Naive thymus-derived CD4-positive, alpha-beta T cell (primary cell): ENCODE measurements at regions of chr1 and their contacts with region 1.

Region 1: DNA sequence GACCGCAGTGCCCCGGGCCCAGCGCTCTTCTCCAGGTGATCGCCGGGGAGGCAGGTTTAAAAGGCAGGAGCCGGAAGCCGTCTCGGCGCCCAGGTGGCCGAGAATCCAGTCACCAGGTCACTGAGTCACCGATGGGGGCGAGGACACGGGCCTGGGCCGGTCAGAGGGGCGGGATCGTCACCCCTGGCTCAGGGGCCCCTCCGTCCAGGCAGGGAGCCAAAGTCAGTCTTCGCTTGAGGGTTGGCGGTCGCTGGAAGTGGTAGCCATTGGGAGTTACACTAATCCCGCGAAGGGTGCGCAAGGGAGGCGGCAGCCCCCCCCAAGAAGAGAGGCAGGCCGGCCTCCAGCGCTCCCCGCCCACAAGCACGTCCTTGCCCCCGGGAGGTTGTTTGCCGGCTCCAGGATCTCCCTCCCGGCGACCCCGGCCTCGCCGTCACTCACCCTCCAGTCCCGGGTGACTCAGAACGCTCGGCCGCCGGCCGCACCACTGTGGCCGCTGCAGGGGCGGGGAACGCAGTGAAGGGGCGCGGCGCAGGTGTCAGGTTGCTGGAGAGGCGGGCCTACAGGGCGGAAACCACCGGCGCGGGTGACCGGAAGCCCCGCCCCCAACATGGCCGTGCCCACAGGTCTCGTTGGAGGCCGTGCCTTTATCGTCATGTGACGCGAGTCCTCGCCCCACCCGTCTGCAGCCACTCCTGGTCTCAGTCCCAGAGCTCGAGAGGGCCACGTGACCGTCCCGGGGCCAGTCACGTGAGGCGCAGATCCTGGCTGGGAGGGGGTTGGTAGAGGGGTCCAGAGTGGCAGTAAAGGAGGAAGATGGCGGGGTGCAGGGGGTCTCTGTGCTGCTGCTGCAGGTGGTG is at the starts of genes CLCN6 and MTHFR:
- DNase-seq: peak; percentile 93 to 98 (median 97)
- ATAC-seq: peak; percentile 95
- H3K4me3 ChIP-seq: peak within 1 kb of the TSS; percentile 86
- H3K4me3 Mint-ChIP-seq: peak within 1 kb of the TSS; percentile 94 to 100 (median 98)
- H3K27ac ChIP-seq: peak within 1 kb of the TSS; percentile 92
- H3K27ac Mint-ChIP-seq: peak within 1 kb of the TSS; percentile 94 to 99 (median 96)
- H3K4me1 ChIP-seq: peaks cover 39 to 40% of the 10 kb centered on the region in 2 donors
- H3K4me1 Mint-ChIP-seq: peaks cover 37 to 72% (median 60%) of the 10 kb centered on the region in 7 donors
- H3K27me3 ChIP-seq: no peaks in the 10 kb centered on the region
- H3K27me3 Mint-ChIP-seq: no peaks in the 10 kb centered on the region
- total RNA-seq, gene CLCN6: 13.3 to 23.0 (median 20.9) TPM
- total RNA-seq, gene MTHFR: 31.0 to 64.4 (median 55.2) TPM

Region 2: DNA sequence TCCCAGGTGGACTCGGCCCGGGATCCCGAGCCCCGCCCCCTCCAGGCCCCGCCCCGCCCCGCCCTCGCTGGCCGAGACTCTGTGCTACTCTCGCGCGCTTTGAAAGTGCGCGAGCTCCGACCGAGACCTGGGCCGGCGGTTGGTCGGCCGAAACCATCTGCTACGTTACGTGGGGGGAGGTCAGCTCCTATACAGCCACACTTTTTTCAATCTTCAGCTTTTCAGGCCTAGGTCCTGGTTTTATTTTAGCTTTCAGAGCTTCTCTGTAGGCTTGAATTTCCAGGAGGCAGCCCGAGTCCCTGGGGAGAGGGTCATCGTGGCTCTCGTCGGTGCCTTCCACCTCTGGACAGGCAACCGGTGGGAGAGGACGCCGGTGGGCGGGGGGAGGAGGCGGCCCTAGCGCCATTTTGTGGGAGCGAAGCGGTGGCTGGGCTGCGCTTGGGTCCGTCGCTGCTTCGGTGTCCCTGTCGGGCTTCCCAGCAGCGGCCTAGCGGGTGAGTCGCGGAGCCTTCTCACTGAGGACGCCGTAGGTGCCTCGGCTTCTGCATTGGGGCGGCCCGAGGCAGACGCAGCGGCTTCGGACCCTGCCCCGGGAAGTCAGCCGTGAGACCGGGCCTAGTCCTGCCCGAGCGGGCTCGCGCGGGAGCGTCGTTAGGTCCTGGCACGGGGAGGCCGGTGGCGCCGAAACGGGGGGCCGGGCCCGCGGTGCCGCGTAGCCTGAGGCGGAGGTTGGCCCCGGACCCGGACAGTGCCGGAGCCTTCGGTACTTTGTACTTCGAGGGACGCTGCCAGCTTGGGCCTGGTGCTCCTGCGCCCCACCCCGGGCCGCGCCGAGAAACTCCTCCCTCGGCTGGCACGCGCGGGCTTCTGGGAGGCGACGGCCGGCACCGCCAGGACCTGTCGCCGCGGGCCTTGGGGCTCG is 793.2 kb before region 1 on chr1 and contains the start of gene TARDBP:
- CTCF ChIA-PET with region 1: no interaction called
- POLR2A ChIA-PET with region 1: no interaction called
- intact Hi-C with region 1: loop called in 1 of 2 experiments (anchors 1 kb)
- DNase-seq: peak; percentile 88 to 95 (median 93)
- ATAC-seq: peak; percentile 95
- H3K4me3 ChIP-seq: peak within 1 kb of the TSS; percentile 74
- H3K4me3 Mint-ChIP-seq: peak within 1 kb of the TSS; percentile 86 to 96 (median 93)
- H3K27ac ChIP-seq: peak within 1 kb of the TSS; percentile 94
- H3K27ac Mint-ChIP-seq: peak within 1 kb of the TSS; percentile 95 to 98 (median 98)
- H3K4me1 ChIP-seq: peaks cover 19 to 24% of the 10 kb centered on the region in 2 donors
- H3K4me1 Mint-ChIP-seq: peaks cover 15 to 36% (median 26%) of the 10 kb centered on the region in 7 donors
- H3K27me3 ChIP-seq: no peaks in the 10 kb centered on the region
- H3K27me3 Mint-ChIP-seq: no peaks in the 10 kb centered on the region
- total RNA-seq, gene TARDBP: 114 to 196 (median 174) TPM

Region 3: GRCh38 chr1:11262171-11263049 is 543.3 kb before region 1 on chr1 and contains the start of gene MTOR:
- CTCF ChIA-PET with region 1: no interaction called
- POLR2A ChIA-PET with region 1: no interaction called
- intact Hi-C with region 1: loop called in 1 of 2 experiments (anchors 5 kb)
- DNase-seq: peak; percentile 76 to 99 (median 98)
- ATAC-seq: peak; percentile 98
- H3K4me3 ChIP-seq: peak within 1 kb of the TSS; percentile 90
- H3K4me3 Mint-ChIP-seq: peak within 1 kb of the TSS; percentile 87 to 98 (median 93)
- H3K27ac ChIP-seq: peak within 1 kb of the TSS; percentile 83
- H3K27ac Mint-ChIP-seq: peak within 1 kb of the TSS; percentile 84 to 96 (median 90)
- H3K4me1 ChIP-seq: peaks cover 9 to 14% of the 10 kb centered on the region in 2 donors
- H3K4me1 Mint-ChIP-seq: peaks cover 6 to 31% (median 22%) of the 10 kb centered on the region in 7 donors
- H3K27me3 ChIP-seq: no peaks in the 10 kb centered on the region
- H3K27me3 Mint-ChIP-seq: peaks cover 0 to 5% (median 0%) of the 10 kb centered on the region in 5 donors
- total RNA-seq, gene MTOR: 38.8 to 47.9 (median 46.2) TPM

Region 4: GRCh38 chr1:11681071-11681771 is 124.5 kb before region 1 on chr1 and contains the start of gene MAD2L2:
- CTCF ChIA-PET with region 1: interaction called, 3 read pairs
- POLR2A ChIA-PET with region 1: interaction called, 3 read pairs
- intact Hi-C with region 1: loop called in 1 of 2 experiments (anchors 1 kb)
- DNase-seq: peak; percentile 80 to 96 (median 87)
- ATAC-seq: peak; percentile 98
- H3K4me3 ChIP-seq: peak within 1 kb of the TSS; percentile 79
- H3K4me3 Mint-ChIP-seq: peak within 1 kb of the TSS; percentile 89 to 99 (median 96)
- H3K27ac ChIP-seq: peak within 1 kb of the TSS; percentile 86
- H3K27ac Mint-ChIP-seq: peak within 1 kb of the TSS; percentile 74 to 98 (median 89)
- H3K4me1 ChIP-seq: peaks cover 0 to 9% of the 10 kb centered on the region in 2 donors
- H3K4me1 Mint-ChIP-seq: peaks cover 6 to 28% (median 19%) of the 10 kb centered on the region in 7 donors
- H3K27me3 ChIP-seq: no peaks in the 10 kb centered on the region
- H3K27me3 Mint-ChIP-seq: peaks cover 0 to 12% (median 0%) of the 10 kb centered on the region in 5 donors
- total RNA-seq, gene MAD2L2: 17.1 to 53.3 (median 27.2) TPM

Region 5: DNA sequence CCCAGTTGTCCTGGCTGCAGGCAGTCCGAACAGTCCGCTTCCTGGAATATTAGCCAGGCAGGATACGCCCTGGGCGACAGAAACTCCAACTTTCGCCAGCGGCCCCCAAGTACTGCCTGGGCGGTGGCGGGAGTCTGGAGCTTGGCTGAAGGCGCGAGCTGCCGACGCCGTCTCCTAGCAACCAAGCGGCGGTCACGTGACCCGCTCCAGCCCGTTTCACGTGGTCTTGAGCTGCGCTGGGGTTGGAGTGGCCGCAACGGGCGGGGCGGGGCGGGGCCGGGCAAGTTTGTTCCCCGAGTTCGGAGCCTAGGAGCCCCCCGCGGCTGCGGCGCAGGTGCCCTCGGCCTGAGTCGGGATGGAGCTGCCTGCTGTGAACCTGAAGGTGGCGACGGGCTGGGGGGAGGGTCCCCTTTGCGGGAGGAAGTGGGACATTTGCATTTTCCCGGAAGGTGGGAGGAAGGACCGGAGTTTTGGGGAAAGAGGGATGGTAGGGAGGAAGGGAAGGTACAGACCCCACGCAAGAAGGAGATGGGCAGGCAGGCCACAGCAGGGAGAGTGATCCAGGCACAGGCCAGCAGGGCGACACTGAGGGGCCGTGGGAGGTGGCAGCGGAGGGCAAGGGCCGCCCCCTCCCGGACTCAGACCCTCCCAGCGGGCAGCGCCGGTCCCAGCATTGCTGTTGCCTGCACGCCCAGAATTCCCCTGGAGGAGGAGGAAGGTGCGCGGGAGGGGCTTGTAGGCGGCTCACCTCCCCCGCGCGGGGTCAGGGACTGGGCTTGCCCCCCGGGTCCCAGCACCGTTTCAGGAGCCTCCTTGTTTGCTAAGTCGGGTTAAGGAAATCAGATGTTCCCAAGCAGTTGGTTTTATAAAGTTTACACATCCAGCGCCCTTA is 69.6 kb before region 1 on chr1 and contains the start of gene AGTRAP:
- CTCF ChIA-PET with region 1: no interaction called
- POLR2A ChIA-PET with region 1: interaction called, 8 read pairs
- intact Hi-C with region 1: loop called (anchors 1 to 5 kb)
- DNase-seq: peak; percentile 62 to 84 (median 71)
- ATAC-seq: peak; percentile 78
- H3K4me3 ChIP-seq: peak within 1 kb of the TSS; percentile 92
- H3K4me3 Mint-ChIP-seq: peak within 1 kb of the TSS; percentile 84 to 96 (median 92)
- H3K27ac ChIP-seq: peak within 1 kb of the TSS; percentile 79
- H3K27ac Mint-ChIP-seq: peak within 1 kb of the TSS; percentile 3 to 95 (median 83)
- H3K4me1 ChIP-seq: peaks cover 38 to 52% of the 10 kb centered on the region in 2 donors
- H3K4me1 Mint-ChIP-seq: peaks cover 51 to 80% (median 76%) of the 10 kb centered on the region in 7 donors
- H3K27me3 ChIP-seq: no peaks in the 10 kb centered on the region
- H3K27me3 Mint-ChIP-seq: no peaks in the 10 kb centered on the region
- total RNA-seq, gene AGTRAP: 28.2 to 82.5 (median 32.7) TPM

Region 6: GRCh38 chr1:11925938-11926292 is 120.2 kb after region 1 on chr1:
- CTCF ChIA-PET with region 1: no interaction called
- POLR2A ChIA-PET with region 1: no interaction called
- intact Hi-C with region 1: loop called (anchors 1 kb)
- DNase-seq: peak in 3 of 9 donors; percentile 22 to 27 (median 23)
- ATAC-seq: peak; percentile 28
- H3K4me3 ChIP-seq: no peak overlapping the region
- H3K4me3 Mint-ChIP-seq: peak overlapping the region in 4 of 10 donors; percentile 82 to 90 (median 84)
- H3K27ac ChIP-seq: peak overlapping the region; percentile 7
- H3K27ac Mint-ChIP-seq: peak overlapping the region in 4 of 9 donors; percentile 60 to 81 (median 71)
- H3K4me1 ChIP-seq: peaks cover 14 to 28% of the 10 kb centered on the region in 2 donors
- H3K4me1 Mint-ChIP-seq: peaks cover 24 to 50% (median 31%) of the 10 kb centered on the region in 7 donors
- H3K27me3 ChIP-seq: no peaks in the 10 kb centered on the region
- H3K27me3 Mint-ChIP-seq: no peaks in the 10 kb centered on the region

Region 7: GRCh38 chr1:12177999-12178441 is 372.3 kb after region 1 on chr1:
- CTCF ChIA-PET with region 1: no interaction called
- POLR2A ChIA-PET with region 1: no interaction called
- intact Hi-C with region 1: loop called in 1 of 2 experiments (anchors 5 kb)
- DNase-seq: peak; percentile 75 to 96 (median 85)
- ATAC-seq: peak; percentile 74
- H3K4me3 ChIP-seq: peak overlapping the region; percentile 38
- H3K4me3 Mint-ChIP-seq: peak overlapping the region; percentile 81 to 92 (median 86)
- H3K27ac ChIP-seq: peak overlapping the region; percentile 82
- H3K27ac Mint-ChIP-seq: peak overlapping the region; percentile 89 to 100 (median 97)
- H3K4me1 ChIP-seq: peaks cover 66 to 80% of the 10 kb centered on the region in 2 donors
- H3K4me1 Mint-ChIP-seq: peaks cover 51 to 91% (median 80%) of the 10 kb centered on the region in 7 donors
- H3K27me3 ChIP-seq: no peaks in the 10 kb centered on the region
- H3K27me3 Mint-ChIP-seq: no peaks in the 10 kb centered on the region

Region 8: GRCh38 chr1:12596007-12596821 is 790.5 kb after region 1 on chr1:
- CTCF ChIA-PET with region 1: no interaction called
- POLR2A ChIA-PET with region 1: no interaction called
- intact Hi-C with region 1: no loop called
- DNase-seq: peak in 1 of 9 donors; percentile 19
- ATAC-seq: peak; percentile 86
- H3K4me3 ChIP-seq: no peak overlapping the region
- H3K4me3 Mint-ChIP-seq: peak overlapping the region in 8 of 10 donors; percentile 43 to 91 (median 73)
- H3K27ac ChIP-seq: no peak overlapping the region
- H3K27ac Mint-ChIP-seq: peak overlapping the region in 1 of 9 donors; percentile 36
- H3K4me1 ChIP-seq: peaks cover 3 to 30% of the 10 kb centered on the region in 2 donors
- H3K4me1 Mint-ChIP-seq: peaks cover 30 to 78% (median 65%) of the 10 kb centered on the region in 7 donors
- H3K27me3 ChIP-seq: no peaks in the 10 kb centered on the region
- H3K27me3 Mint-ChIP-seq: peaks cover 0 to 13% (median 0%) of the 10 kb centered on the region in 5 donors